GM12878 (cell line): ENCODE measurements at regions of chr22 and their contacts with region 1.

Region 1: DNA sequence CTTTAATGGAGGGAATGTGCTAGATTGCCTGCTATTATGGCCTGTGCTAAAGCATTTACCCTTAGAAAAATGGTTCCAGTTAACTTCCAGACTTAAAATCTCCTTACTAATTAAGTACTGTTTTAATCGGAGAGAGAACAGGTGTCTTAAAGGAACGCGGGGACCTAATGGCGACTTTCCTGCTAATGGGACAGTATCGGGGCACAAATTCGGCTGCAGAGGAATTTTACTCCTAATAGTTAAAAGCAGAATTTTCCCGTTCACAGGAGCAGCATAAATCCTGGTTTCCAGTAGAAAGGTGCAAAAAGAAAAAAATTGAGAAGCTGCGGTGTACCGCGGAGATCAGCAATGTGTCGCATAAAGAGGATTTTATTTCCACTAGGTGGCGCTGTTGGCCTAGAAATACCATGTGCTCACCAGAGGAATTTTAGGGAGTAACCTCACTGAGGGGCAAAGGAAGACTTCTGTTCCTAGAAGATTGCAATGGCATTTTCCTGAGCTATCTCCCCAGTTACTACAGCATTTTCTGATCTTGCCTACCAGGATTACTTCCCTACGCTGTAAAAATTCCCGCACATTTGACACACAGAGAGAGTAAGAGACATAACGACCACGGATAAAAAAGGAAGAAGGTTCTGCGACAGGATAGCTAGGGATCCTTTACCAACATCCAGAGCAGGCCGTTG is 44.5 kb downstream of the ZNF280B start:
- DNase-seq: no peak
- ATAC-seq: peak; percentile 71
- H3K4me3 ChIP-seq: no peak overlapping the region
- H3K27ac ChIP-seq: no peak overlapping the region
- H3K4me1 ChIP-seq: no peaks in the 10 kb centered on the region
- H3K27me3 ChIP-seq: no peaks in the 10 kb centered on the region
- CTCF ChIP-seq: peak; percentile 27 to 63 (median 55); a peak in 5 of 6 replicates
- EP300 ChIP-seq: no peak
- POLR2A ChIP-seq: no peak
- RAD21 ChIP-seq: peak; percentile 68

Region 2: GRCh38 chr22:21938071-21938822 is 525.8 kb before region 1 on chr22:
- CTCF ChIA-PET with region 1: no interaction called
- POLR2A ChIA-PET with region 1: no interaction called
- RAD21 ChIA-PET with region 1: no interaction called
- SMC1A ChIA-PET with region 1: no interaction called
- in situ Hi-C with region 1: no loop called
- intact Hi-C with region 1: no loop called
- DNase-seq: peak; percentile 62
- ATAC-seq: peak; percentile 99
- H3K4me3 ChIP-seq: peak overlapping the region; percentile 76
- H3K27ac ChIP-seq: peak overlapping the region; percentile 59
- H3K4me1 ChIP-seq: peaks cover 16% of the 10 kb centered on the region
- H3K27me3 ChIP-seq: no peaks in the 10 kb centered on the region
- CTCF ChIP-seq: peak; percentile 98 to 100 (median 99)
- EP300 ChIP-seq: 0 out of 4 replicates have a peak, but pooled peaks of 1 of the 2 experiments have one; percentile 16
- POLR2A ChIP-seq: peak; percentile 85
- RAD21 ChIP-seq: peak; percentile 85

Region 3: GRCh38 chr22:22408731-22409696 is 55.0 kb before region 1 on chr22:
- CTCF ChIA-PET with region 1: interaction called, 9 read pairs
- POLR2A ChIA-PET with region 1: no interaction called
- RAD21 ChIA-PET with region 1: interaction called, 11 read pairs
- SMC1A ChIA-PET with region 1: interaction called, 6 read pairs
- in situ Hi-C with region 1: no loop called
- intact Hi-C with region 1: no loop called
- DNase-seq: no peak
- ATAC-seq: peak; percentile 95
- H3K4me3 ChIP-seq: no peak overlapping the region
- H3K27ac ChIP-seq: no peak overlapping the region
- H3K4me1 ChIP-seq: no peaks in the 10 kb centered on the region; the same call in 1 of the 2 replicates
- H3K27me3 ChIP-seq: no peaks in the 10 kb centered on the region
- CTCF ChIP-seq: peak; percentile 40 to 59 (median 48)
- EP300 ChIP-seq: no peak
- POLR2A ChIP-seq: no peak
- RAD21 ChIP-seq: peak; percentile 41; the same call in 1 of the 2 replicates

Region 4: GRCh38 chr22:22431271-22432220 is 32.5 kb before region 1 on chr22:
- CTCF ChIA-PET with region 1: interaction called, 75 read pairs
- POLR2A ChIA-PET with region 1: no interaction called
- RAD21 ChIA-PET with region 1: interaction called, 21 read pairs
- SMC1A ChIA-PET with region 1: interaction called, 53 read pairs
- in situ Hi-C with region 1: no loop called
- intact Hi-C with region 1: loop called (anchors 1 kb)
- DNase-seq: no peak
- ATAC-seq: peak; percentile 97
- H3K4me3 ChIP-seq: no peak overlapping the region
- H3K27ac ChIP-seq: no peak overlapping the region
- H3K4me1 ChIP-seq: no peaks in the 10 kb centered on the region
- H3K27me3 ChIP-seq: no peaks in the 10 kb centered on the region
- CTCF ChIP-seq: peak; percentile 46 to 62 (median 62)
- EP300 ChIP-seq: no peak
- POLR2A ChIP-seq: no peak
- RAD21 ChIP-seq: peak; percentile 61

Region 5: GRCh38 chr22:22450343-22450839 is 13.6 kb before region 1 on chr22:
- CTCF ChIA-PET with region 1: interaction called, 24 read pairs
- POLR2A ChIA-PET with region 1: no interaction called
- RAD21 ChIA-PET with region 1: interaction called, 5 read pairs
- SMC1A ChIA-PET with region 1: interaction called, 5 read pairs
- in situ Hi-C with region 1: no loop called
- intact Hi-C with region 1: no loop called
- DNase-seq: peak; percentile 55
- ATAC-seq: peak; percentile 100
- H3K4me3 ChIP-seq: no peak overlapping the region
- H3K27ac ChIP-seq: no peak overlapping the region
- H3K4me1 ChIP-seq: peaks cover 9% of the 10 kb centered on the region
- H3K27me3 ChIP-seq: no peaks in the 10 kb centered on the region
- CTCF ChIP-seq: peak in 2 of 3 experiments; percentile 10 to 23; a peak in 2 of 6 replicates
- EP300 ChIP-seq: peak in 1 of 2 experiments; percentile 29; a peak in 2 of 4 replicates
- POLR2A ChIP-seq: no peak
- RAD21 ChIP-seq: no peak

Region 6: GRCh38 chr22:22488736-22489135 is 24.7 kb after region 1 on chr22:
- CTCF ChIA-PET with region 1: no interaction called
- POLR2A ChIA-PET with region 1: no interaction called
- RAD21 ChIA-PET with region 1: no interaction called
- SMC1A ChIA-PET with region 1: no interaction called
- in situ Hi-C with region 1: no loop called
- intact Hi-C with region 1: no loop called
- DNase-seq: no peak
- ATAC-seq: no peak
- H3K4me3 ChIP-seq: no peak overlapping the region
- H3K27ac ChIP-seq: no peak overlapping the region
- H3K4me1 ChIP-seq: no peaks in the 10 kb centered on the region
- H3K27me3 ChIP-seq: no peaks in the 10 kb centered on the region
- CTCF ChIP-seq: no peak
- EP300 ChIP-seq: no peak
- POLR2A ChIP-seq: no peak
- RAD21 ChIP-seq: no peak

Region 7: GRCh38 chr22:22538226-22538989 is 74.4 kb after region 1 on chr22:
- CTCF ChIA-PET with region 1: no interaction called
- POLR2A ChIA-PET with region 1: no interaction called
- RAD21 ChIA-PET with region 1: no interaction called
- SMC1A ChIA-PET with region 1: no interaction called
- in situ Hi-C with region 1: no loop called
- intact Hi-C with region 1: no loop called
- DNase-seq: no peak
- ATAC-seq: no peak
- H3K4me3 ChIP-seq: no peak overlapping the region
- H3K27ac ChIP-seq: no peak overlapping the region
- H3K4me1 ChIP-seq: no peaks in the 10 kb centered on the region
- H3K27me3 ChIP-seq: no peaks in the 10 kb centered on the region
- CTCF ChIP-seq: no peak
- EP300 ChIP-seq: no peak
- POLR2A ChIP-seq: no peak
- RAD21 ChIP-seq: no peak

Region 8: DNA sequence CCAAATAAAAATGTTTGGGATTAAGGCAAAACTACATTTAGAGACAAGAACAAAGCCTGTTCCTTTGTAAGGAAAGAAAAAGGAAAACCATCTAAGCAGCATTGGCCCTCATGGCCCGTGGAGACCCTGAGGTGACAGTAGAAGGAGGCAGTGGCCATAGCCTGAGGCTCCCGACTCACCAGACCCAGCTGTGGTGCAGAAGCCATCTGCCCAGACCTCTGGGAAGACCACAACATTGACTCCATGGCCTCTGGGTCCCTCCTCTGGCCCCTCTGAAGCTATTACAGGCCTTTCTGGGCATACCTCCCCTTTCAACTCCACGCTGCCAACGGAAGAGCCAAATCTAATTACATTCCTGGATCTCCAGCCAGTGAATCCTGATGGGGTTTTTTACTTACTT is 88.6 kb after region 1 on chr22:
- CTCF ChIA-PET with region 1: interaction called, 21 read pairs
- POLR2A ChIA-PET with region 1: no interaction called
- RAD21 ChIA-PET with region 1: interaction called, 7 read pairs
- SMC1A ChIA-PET with region 1: interaction called, 7 read pairs
- in situ Hi-C with region 1: no loop called
- intact Hi-C with region 1: no loop called
- DNase-seq: no peak
- ATAC-seq: peak; percentile 33
- H3K4me3 ChIP-seq: no peak overlapping the region
- H3K27ac ChIP-seq: no peak overlapping the region
- H3K4me1 ChIP-seq: 0 out of 2 replicates have a peak, but pooled peaks cover 4% of the 10 kb centered on the region
- H3K27me3 ChIP-seq: no peaks in the 10 kb centered on the region
- CTCF ChIP-seq: peak in 2 of 3 experiments; percentile 26 to 33; a peak in 3 of 6 replicates
- EP300 ChIP-seq: no peak
- POLR2A ChIP-seq: no peak
- RAD21 ChIP-seq: peak; percentile 44

Region 9: DNA sequence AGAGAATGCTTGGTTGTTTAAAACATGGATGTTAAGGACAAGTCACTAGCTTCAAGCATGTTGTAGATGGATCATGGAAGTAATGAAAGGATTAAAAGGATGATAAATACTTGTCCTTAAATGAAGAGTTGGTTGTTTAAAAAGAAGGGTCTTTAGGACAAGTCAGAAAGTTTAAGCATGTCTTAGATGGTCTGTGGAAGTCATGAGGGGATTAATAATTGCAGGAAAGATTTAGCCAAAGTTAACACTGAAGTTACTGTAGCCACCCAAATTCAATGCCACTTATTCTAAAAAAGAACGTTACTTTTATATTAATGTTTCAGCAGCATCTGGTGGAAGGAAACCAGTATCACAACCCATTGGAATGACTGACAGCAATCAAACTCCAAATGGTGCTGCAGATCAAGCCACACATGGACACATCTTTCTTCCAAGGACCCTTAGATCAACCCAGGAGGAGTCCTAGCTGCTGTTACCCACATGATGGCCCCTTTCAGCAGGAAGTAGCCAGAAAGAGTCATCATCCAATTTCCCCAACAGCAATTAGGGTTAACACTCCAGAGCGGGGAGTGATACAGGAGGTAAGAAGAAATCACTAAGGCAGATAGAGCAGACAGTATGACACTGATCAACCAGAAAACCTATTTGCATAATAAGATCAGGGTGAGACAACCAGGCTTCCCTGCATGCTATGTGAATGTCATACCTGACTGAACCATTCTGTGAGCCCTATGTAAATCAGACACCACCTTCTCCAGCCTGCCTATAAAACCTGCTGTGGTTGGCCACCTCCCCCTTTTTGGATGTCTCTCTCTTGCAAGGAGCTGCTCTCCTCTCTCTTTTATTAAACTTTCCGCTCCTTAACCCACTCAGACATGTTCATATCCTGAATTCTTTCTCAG is 517.9 kb after region 1 on chr22:
- CTCF ChIA-PET with region 1: no interaction called
- POLR2A ChIA-PET with region 1: no interaction called
- RAD21 ChIA-PET with region 1: no interaction called
- SMC1A ChIA-PET with region 1: no interaction called
- in situ Hi-C with region 1: no loop called
- intact Hi-C with region 1: no loop called
- DNase-seq: no peak
- ATAC-seq: peak; percentile 39
- H3K4me3 ChIP-seq: no peak overlapping the region
- H3K27ac ChIP-seq: no peak overlapping the region
- H3K4me1 ChIP-seq: no peaks in the 10 kb centered on the region
- H3K27me3 ChIP-seq: no peaks in the 10 kb centered on the region; a peak in 1 of 4 replicates
- CTCF ChIP-seq: no peak
- EP300 ChIP-seq: no peak
- POLR2A ChIP-seq: no peak
- RAD21 ChIP-seq: no peak